Naive thymus-derived CD4-positive, alpha-beta T cell (primary cell): ENCODE measurements at regions of chr6 and their contacts with region 1.

Region 1: DNA sequence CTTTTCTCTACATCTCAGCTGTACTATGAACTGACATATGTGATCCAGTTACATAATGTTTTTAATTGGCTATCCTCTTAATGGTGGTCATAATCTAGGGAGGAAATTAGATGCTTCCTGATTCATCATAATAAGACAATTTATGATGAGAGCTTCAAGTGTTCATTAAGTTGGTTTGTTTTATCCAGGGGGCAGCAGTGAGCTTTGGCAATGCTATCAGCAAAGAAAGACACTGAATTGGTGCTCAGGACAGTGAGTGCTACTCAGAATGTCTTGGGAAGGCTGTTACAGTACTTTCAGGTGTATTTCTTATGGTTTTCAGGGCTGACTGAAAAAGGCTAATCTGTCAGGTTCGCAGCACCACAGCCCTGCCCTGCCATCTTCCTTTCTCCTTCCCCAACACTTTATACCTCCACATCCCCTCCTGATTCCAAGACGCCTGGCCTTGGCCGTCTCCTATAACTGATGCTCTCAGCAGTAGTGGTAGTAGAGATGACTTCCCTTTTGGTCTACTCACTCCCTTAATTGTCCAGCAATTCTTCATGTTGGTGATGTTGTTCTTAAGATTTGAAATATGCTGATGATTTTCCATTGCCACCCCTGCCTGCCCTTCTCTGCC is 67.0 kb upstream of the TNFAIP3 start:
- DNase-seq: peak in 7 of 9 donors; percentile 75 to 87 (median 81)
- ATAC-seq: peak; percentile 91
- H3K4me3 ChIP-seq: no peak overlapping the region
- H3K4me3 Mint-ChIP-seq: peak overlapping the region in 9 of 10 donors; percentile 0 to 71 (median 49)
- H3K27ac ChIP-seq: peak overlapping the region; percentile 50
- H3K27ac Mint-ChIP-seq: peak overlapping the region; percentile 70 to 97 (median 89)
- H3K4me1 ChIP-seq: peaks cover 15 to 47% of the 10 kb centered on the region in 2 donors
- H3K4me1 Mint-ChIP-seq: peaks cover 27 to 72% (median 64%) of the 10 kb centered on the region in 7 donors
- H3K27me3 ChIP-seq: no peaks in the 10 kb centered on the region
- H3K27me3 Mint-ChIP-seq: no peaks in the 10 kb centered on the region

Region 2: GRCh38 chr6:137680705-137681346 is 119.2 kb before region 1 on chr6:
- CTCF ChIA-PET with region 1: no interaction called
- POLR2A ChIA-PET with region 1: no interaction called
- intact Hi-C with region 1: no loop called
- DNase-seq: no peak
- ATAC-seq: no peak
- H3K4me3 ChIP-seq: no peak overlapping the region
- H3K4me3 Mint-ChIP-seq: peak overlapping the region in 1 of 10 donors; percentile 22
- H3K27ac ChIP-seq: no peak overlapping the region
- H3K27ac Mint-ChIP-seq: peak overlapping the region in 1 of 9 donors; percentile 58
- H3K4me1 ChIP-seq: peaks cover 0 to 8% of the 10 kb centered on the region in 2 donors
- H3K4me1 Mint-ChIP-seq: peaks cover 0 to 60% (median 4%) of the 10 kb centered on the region in 7 donors
- H3K27me3 ChIP-seq: no peaks in the 10 kb centered on the region
- H3K27me3 Mint-ChIP-seq: peaks cover 0 to 18% (median 10%) of the 10 kb centered on the region in 5 donors

Region 3: GRCh38 chr6:137811121-137811915 is 11.3 kb after region 1 on chr6:
- CTCF ChIA-PET with region 1: interaction called, 14 read pairs
- POLR2A ChIA-PET with region 1: interaction called, 6 read pairs
- intact Hi-C with region 1: loop called (anchors 1 kb)
- DNase-seq: peak; percentile 42 to 85 (median 53)
- ATAC-seq: peak; percentile 94
- H3K4me3 ChIP-seq: peak overlapping the region; percentile 14
- H3K4me3 Mint-ChIP-seq: peak overlapping the region; percentile 71 to 84 (median 78)
- H3K27ac ChIP-seq: peak overlapping the region; percentile 60
- H3K27ac Mint-ChIP-seq: peak overlapping the region; percentile 89 to 96 (median 93)
- H3K4me1 ChIP-seq: peaks cover 17 to 23% of the 10 kb centered on the region in 2 donors
- H3K4me1 Mint-ChIP-seq: peaks cover 22 to 56% (median 46%) of the 10 kb centered on the region in 7 donors
- H3K27me3 ChIP-seq: no peaks in the 10 kb centered on the region
- H3K27me3 Mint-ChIP-seq: no peaks in the 10 kb centered on the region

Region 4: DNA sequence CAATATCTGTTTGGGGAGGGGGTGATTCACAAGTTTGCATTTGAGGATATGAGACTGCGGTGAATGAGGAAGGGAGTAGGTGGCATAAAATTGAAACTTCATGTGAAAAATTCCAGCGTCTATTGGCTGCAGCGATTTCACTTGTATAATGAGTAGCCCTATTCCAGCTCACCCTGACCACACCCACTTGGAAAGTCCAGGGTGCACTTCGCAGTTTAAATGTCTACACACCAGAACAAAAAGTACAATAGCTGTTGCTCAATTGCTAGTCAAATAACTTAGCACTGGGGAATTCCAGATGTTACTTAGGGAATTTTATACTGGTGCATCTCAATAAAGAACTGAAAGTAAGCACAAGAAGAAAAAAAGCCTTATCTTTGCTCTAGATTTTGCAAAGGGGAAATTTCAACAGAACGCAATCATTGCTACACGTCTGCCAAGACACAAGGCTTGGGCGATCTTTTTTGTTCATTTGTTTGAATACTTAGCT is 73.3 kb after region 1 on chr6:
- CTCF ChIA-PET with region 1: interaction called, 74 read pairs
- POLR2A ChIA-PET with region 1: interaction called, 89 read pairs
- intact Hi-C with region 1: no loop called
- DNase-seq: peak in 6 of 9 donors; percentile 12 to 81 (median 37)
- ATAC-seq: peak; percentile 54
- H3K4me3 ChIP-seq: peak overlapping the region; percentile 0
- H3K4me3 Mint-ChIP-seq: peak overlapping the region; percentile 60 to 98 (median 94)
- H3K27ac ChIP-seq: peak overlapping the region; percentile 99
- H3K27ac Mint-ChIP-seq: peak overlapping the region; percentile 61 to 99 (median 94)
- H3K4me1 ChIP-seq: peaks cover 38 to 49% of the 10 kb centered on the region in 2 donors
- H3K4me1 Mint-ChIP-seq: peaks cover 53 to 91% (median 78%) of the 10 kb centered on the region in 7 donors
- H3K27me3 ChIP-seq: no peaks in the 10 kb centered on the region
- H3K27me3 Mint-ChIP-seq: no peaks in the 10 kb centered on the region

Region 5: DNA sequence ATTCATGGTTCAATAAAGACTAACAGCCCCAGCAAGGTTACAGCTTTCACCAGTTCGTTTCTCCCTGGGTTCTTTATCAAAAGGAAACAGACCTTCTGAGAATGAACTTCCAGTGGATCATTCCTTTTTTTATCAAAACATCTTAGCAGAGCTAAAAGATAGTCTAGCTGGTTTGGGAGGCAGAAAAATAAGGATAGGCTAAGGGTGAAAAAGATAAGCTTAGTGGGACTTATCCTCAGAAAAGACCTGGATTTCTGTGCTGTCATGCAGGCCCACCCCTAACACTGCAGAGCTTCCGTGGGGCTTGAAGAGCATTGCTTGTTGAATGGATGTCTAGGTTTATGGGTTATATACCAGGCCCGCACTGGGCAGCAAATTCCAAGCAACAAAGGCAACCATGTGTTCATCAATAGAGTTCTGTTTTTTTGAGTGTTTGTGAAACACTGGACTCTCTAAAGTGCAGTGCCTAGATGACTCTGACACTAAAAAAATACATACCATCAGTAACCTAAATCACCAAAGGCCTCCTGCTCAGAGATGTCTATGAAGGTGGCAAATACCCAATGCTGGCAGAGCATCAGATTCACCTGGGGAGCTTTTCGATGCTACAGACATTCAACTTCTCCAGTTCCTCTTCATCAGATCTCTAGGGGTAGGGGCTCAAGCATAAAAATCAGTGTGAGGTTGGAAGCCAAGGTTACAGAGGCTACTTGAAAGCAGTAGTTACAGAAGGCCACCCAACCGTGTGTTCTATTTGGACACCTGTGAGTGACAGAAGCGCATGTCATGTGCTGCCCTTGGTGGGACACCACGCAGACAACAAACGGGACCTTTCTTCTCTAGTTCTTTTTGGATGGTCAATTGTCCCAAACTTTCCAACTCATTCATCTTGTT is 120.0 kb after region 1 on chr6:
- CTCF ChIA-PET with region 1: no interaction called
- POLR2A ChIA-PET with region 1: no interaction called
- intact Hi-C with region 1: no loop called
- DNase-seq: no peak
- ATAC-seq: no peak
- H3K4me3 ChIP-seq: no peak overlapping the region
- H3K4me3 Mint-ChIP-seq: no peak overlapping the region
- H3K27ac ChIP-seq: no peak overlapping the region
- H3K27ac Mint-ChIP-seq: no peak overlapping the region
- H3K4me1 ChIP-seq: no peaks in the 10 kb centered on the region
- H3K4me1 Mint-ChIP-seq: peaks cover 0 to 25% (median 1%) of the 10 kb centered on the region in 7 donors
- H3K27me3 ChIP-seq: no peaks in the 10 kb centered on the region
- H3K27me3 Mint-ChIP-seq: no peaks in the 10 kb centered on the region

Region 6: GRCh38 chr6:137944793-137945498 is 144.9 kb after region 1 on chr6:
- CTCF ChIA-PET with region 1: interaction called, 55 read pairs
- POLR2A ChIA-PET with region 1: interaction called, 6 read pairs
- intact Hi-C with region 1: loop called (anchors 1 to 5 kb)
- DNase-seq: peak in 6 of 9 donors; percentile 7 to 52 (median 39)
- ATAC-seq: peak; percentile 88
- H3K4me3 ChIP-seq: no peak overlapping the region
- H3K4me3 Mint-ChIP-seq: no peak overlapping the region
- H3K27ac ChIP-seq: no peak overlapping the region
- H3K27ac Mint-ChIP-seq: peak overlapping the region in 3 of 9 donors; percentile 45 to 76 (median 59)
- H3K4me1 ChIP-seq: peaks cover 1 to 7% of the 10 kb centered on the region in 2 donors
- H3K4me1 Mint-ChIP-seq: peaks cover 4 to 48% (median 18%) of the 10 kb centered on the region in 7 donors
- H3K27me3 ChIP-seq: no peaks in the 10 kb centered on the region
- H3K27me3 Mint-ChIP-seq: no peaks in the 10 kb centered on the region

Region 7: DNA sequence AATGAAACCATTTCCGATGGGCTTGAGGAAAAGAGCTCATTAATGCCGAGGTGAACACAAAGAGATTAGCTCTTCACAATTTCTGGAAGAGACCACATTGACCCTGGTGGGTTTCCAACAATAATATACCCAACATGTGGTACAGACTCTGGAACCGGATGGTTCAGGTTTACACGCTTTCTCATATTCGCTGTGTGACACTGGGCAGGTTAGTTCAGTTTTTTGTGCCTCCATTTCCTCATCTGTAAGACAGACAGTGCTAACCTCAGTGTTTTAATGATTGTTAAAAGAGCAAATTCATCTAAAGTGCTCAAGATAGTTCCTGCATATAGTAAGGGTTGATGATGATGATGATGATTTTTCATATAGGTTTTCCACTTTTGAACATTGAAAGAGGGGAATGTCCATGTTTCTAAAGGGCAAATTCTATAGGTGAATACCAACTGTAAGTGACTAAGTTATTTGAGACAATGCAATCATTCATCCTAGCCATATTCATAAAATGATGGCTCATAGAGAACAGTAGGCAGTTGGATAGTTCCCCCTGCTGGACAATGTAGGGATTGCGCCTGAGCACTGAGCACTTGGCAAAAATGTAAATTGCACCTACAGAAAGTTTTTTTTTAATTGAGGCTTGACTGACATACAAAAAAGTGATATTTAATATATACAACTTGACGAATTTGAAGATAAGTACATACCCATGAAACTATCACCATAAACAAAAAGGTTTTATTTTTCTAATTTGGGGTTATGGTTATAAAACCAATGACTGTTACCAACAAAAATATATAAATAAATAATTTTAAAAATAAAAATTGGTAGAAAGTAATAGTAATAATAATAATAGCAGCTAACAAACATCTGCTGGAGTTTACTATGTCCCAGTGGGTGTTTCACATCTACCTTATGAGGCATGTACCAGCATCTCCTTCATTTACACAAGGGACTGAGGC is 309.3 kb after region 1 on chr6:
- CTCF ChIA-PET with region 1: no interaction called
- POLR2A ChIA-PET with region 1: no interaction called
- intact Hi-C with region 1: loop called (anchors 5 kb)
- DNase-seq: peak; percentile 47 to 77 (median 68)
- ATAC-seq: peak; percentile 84
- H3K4me3 ChIP-seq: no peak overlapping the region
- H3K4me3 Mint-ChIP-seq: peak overlapping the region in 4 of 10 donors; percentile 2 to 45 (median 7)
- H3K27ac ChIP-seq: no peak overlapping the region
- H3K27ac Mint-ChIP-seq: no peak overlapping the region
- H3K4me1 ChIP-seq: peaks cover 8 to 10% of the 10 kb centered on the region in 2 donors
- H3K4me1 Mint-ChIP-seq: peaks cover 14 to 27% (median 20%) of the 10 kb centered on the region in 7 donors
- H3K27me3 ChIP-seq: peaks cover 0 to 6% of the 10 kb centered on the region in 2 donors
- H3K27me3 Mint-ChIP-seq: peaks cover 34 to 56% (median 47%) of the 10 kb centered on the region in 5 donors